Activated naive CD4-positive, alpha-beta T cell treated with anti-CD3 and anti-CD28 coated beads for 36 hours (primary cell): ENCODE measurements at regions of chr9 and their contacts with region 1.

Region 1: DNA sequence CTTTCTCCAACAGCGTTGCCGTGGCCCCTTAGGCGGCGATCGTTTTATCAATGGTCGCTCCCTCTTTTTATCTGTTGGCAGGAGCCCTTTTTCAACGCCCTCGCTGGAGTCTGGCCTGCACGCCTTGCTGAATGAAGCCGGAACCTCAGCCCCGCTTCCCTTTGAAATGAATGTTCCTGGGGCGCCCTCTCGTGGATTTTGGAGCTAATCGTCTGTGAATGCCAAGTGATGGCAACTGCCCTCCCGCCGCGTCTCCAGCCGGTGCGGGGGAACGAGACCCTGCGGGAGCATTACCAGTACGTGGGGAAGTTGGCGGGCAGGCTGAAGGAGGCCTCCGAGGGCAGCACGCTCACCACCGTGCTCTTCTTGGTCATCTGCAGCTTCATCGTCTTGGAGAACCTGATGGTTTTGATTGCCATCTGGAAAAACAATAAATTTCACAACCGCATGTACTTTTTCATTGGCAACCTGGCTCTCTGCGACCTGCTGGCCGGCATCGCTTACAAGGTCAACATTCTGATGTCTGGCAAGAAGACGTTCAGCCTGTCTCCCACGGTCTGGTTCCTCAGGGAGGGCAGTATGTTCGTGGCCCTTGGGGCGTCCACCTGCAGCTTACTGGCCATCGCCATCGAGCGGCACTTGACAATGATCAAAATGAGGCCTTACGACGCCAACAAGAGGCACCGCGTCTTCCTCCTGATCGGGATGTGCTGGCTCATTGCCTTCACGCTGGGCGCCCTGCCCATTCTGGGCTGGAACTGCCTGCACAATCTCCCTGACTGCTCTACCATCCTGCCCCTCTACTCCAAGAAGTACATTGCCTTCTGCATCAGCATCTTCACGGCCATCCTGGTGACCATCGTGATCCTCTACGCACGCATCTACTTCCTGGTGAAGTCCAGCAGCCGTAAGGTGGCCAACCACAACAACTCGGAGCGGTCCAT is 10.0 kb downstream of the S1PR3 start:
- DNase-seq: peak; percentile 91
- H3K4me3 Mint-ChIP-seq: no peak overlapping the region
- H3K27ac Mint-ChIP-seq: no peak overlapping the region
- H3K4me1 Mint-ChIP-seq: no peaks in the 10 kb centered on the region
- H3K27me3 Mint-ChIP-seq: peaks cover 26% of the 10 kb centered on the region

Region 2: DNA sequence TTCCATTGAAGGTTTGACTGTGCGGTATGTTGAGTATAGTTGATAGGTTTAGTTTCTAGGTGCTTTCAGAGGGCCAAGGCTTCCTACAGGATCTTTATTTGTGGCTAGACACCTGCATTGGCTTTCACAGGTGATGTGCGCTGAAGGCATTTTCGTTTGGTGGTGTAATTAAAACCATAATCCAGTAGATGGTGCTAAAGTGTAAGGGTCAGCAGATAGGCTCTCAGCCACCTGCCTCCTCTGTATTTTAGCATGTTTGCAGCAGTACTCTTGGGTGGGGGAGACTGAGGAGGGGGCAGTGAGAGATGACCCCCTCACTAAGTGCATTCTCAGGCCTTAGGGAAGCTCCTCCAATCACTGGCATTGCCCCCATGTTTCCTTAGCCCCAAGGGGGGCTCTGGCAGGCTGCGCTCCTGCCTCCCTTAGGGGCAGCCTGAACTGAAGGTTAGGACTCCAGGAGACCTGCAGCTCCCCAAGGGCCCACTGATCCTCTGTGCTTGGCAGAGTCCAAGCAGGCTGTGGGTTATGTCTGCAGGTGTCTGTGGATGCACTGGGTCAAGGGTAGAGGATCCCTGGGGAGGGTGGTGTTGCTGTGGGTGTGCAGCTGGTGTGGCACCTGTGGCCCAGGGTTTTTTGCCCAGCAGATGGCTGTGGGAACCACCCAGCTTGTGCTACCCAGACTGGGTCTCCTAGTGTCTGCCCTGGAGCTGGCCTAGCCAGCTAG is 1050.3 kb before region 1 on chr9:
- CTCF ChIA-PET with region 1: no interaction called
- intact Hi-C with region 1: loop called (anchors 10 kb)
- DNase-seq: no peak
- H3K4me3 Mint-ChIP-seq: no peak overlapping the region
- H3K27ac Mint-ChIP-seq: no peak overlapping the region
- H3K4me1 Mint-ChIP-seq: no peaks in the 10 kb centered on the region
- H3K27me3 Mint-ChIP-seq: peaks cover 32% of the 10 kb centered on the region

Region 3: DNA sequence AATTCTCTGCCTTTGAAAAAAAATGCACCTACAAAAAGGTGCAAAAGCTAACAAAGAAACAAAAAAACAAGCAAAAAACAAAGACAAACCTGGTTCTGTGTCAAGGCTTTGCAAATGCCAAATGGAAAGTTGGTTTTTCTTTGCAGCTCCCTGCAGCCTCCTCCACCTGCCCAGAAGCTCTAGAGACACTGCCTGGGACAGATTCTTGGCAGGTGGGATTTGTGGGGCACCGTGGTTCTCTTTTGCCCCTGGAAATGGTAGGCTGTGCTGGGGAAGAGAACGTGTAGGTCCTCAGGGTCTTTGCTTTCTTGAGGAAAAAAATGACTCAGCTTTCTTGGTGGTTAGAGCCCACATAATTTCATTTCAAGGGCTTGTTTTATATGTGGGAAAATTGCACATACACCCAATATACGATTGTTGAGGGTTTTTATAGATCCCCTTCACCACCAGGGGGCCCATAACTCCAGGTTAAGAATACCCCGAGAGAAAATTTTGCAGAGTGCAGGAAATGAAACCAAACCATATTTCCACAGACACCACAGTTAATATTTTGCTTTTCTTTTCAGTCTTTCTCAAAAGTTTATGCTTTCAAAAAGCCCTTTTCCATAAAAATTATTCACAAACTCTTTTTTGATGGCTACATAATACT is 407.6 kb before region 1 on chr9:
- CTCF ChIA-PET with region 1: interaction called, 5 read pairs
- intact Hi-C with region 1: loop called (anchors 1 kb)
- DNase-seq: peak; percentile 74
- H3K4me3 Mint-ChIP-seq: no peak overlapping the region
- H3K27ac Mint-ChIP-seq: no peak overlapping the region
- H3K4me1 Mint-ChIP-seq: peaks cover 5% of the 10 kb centered on the region
- H3K27me3 Mint-ChIP-seq: peaks cover 6% of the 10 kb centered on the region

Region 4: GRCh38 chr9:88660611-88661010 is 340.6 kb before region 1 on chr9:
- CTCF ChIA-PET with region 1: interaction called, 3 read pairs
- intact Hi-C with region 1: loop called (anchors 2 kb)
- DNase-seq: peak; percentile 32
- H3K4me3 Mint-ChIP-seq: no peak overlapping the region
- H3K27ac Mint-ChIP-seq: no peak overlapping the region
- H3K4me1 Mint-ChIP-seq: no peaks in the 10 kb centered on the region
- H3K27me3 Mint-ChIP-seq: peaks cover 8% of the 10 kb centered on the region

Region 5: GRCh38 chr9:88722753-88723152 is 278.5 kb before region 1 on chr9:
- CTCF ChIA-PET with region 1: no interaction called
- intact Hi-C with region 1: loop called (anchors 2 kb)
- DNase-seq: no peak
- H3K4me3 Mint-ChIP-seq: no peak overlapping the region
- H3K27ac Mint-ChIP-seq: no peak overlapping the region
- H3K4me1 Mint-ChIP-seq: no peaks in the 10 kb centered on the region
- H3K27me3 Mint-ChIP-seq: peaks cover 18% of the 10 kb centered on the region

Region 6: DNA sequence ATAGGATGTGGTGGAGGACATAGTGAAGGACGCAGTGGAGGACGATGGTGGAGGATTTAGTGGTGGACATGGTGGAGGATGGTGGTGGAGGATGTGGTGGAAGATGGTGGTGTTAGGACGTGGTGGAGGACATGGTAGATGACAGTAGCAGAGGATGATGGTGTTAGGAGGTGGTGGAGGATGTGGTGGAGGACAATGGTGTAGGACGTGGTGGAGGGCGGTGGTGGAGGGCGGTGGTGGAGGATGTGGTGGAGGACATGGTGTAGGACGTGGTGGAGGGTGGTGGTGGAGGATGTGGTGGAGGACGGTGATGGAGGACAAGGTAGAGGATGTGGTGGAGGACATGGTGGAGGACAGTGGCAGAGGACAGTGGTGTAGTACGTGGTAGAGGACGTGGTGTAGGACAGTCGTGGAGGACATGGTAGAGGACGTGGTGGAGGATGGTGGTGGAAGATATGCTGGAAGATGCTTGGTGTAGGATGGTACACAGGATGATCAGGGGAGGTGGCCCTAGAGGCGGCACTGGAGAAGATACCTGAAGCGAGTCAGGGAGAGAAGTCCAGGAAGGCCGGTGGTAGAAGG is 58.8 kb after region 1 on chr9:
- CTCF ChIA-PET with region 1: no interaction called
- intact Hi-C with region 1: no loop called
- DNase-seq: no peak
- H3K4me3 Mint-ChIP-seq: no peak overlapping the region
- H3K27ac Mint-ChIP-seq: no peak overlapping the region
- H3K4me1 Mint-ChIP-seq: no peaks in the 10 kb centered on the region
- H3K27me3 Mint-ChIP-seq: peaks cover 8% of the 10 kb centered on the region

Region 7: DNA sequence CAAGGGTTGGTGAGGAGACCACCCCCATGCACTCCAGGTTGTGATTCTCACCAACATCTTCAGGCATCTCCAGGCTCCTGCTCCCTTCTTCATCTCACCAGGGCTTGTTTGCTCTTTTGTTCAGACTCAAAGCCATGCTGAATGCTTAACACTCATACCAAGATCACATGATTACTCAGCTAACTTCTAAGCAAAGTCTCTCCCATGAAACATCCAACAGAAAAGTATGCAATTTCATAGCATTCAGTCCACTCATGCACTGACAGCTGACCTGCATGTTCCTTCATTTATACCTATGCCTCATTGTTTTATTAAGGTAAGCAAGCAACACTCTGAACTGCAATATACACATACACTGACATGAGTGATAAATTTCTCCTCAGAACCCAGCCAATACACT is 108.4 kb after region 1 on chr9:
- CTCF ChIA-PET with region 1: no interaction called
- intact Hi-C with region 1: no loop called
- DNase-seq: no peak
- H3K4me3 Mint-ChIP-seq: no peak overlapping the region
- H3K27ac Mint-ChIP-seq: no peak overlapping the region
- H3K4me1 Mint-ChIP-seq: no peaks in the 10 kb centered on the region
- H3K27me3 Mint-ChIP-seq: peaks cover 9% of the 10 kb centered on the region

Region 8: DNA sequence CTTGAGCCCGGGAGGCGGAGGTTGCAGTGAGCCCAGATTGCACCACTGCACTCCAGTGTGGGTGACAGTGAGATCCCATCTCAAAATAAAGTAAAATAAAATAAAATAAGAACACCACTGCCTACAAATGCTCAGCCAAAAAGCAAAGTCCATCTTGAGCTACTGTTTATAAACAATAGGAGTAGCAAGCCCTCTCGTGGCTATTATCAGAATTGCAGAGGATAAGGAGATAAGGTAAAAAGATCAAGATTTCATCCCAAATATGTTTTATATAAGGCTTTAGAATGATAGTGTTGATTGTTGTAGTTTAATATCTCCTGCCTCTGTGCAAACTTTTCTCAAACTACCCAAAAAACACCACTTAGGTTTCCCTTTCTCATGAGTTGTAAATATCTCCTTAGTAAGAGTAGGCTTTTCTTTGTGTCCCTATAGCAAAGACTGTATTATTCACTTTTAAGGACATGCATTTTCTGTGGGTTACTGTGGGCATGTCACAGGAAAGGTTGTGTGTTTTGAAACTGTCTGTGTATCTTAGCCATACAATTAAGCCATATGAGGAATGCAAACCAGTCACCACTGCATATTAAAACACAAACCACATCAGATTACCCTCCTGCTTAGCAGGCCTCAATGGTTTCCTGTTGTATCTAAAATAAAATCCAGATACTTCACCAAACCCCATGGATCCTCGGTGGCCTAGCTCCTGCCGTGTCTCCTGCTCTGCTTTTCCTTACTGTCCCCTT is 277.9 kb after region 1 on chr9:
- CTCF ChIA-PET with region 1: no interaction called
- intact Hi-C with region 1: loop called (anchors 5 kb)
- DNase-seq: peak; percentile 38
- H3K4me3 Mint-ChIP-seq: no peak overlapping the region
- H3K27ac Mint-ChIP-seq: no peak overlapping the region
- H3K4me1 Mint-ChIP-seq: peaks cover 41% of the 10 kb centered on the region
- H3K27me3 Mint-ChIP-seq: peaks cover 1% of the 10 kb centered on the region